ENCODE measurements at regions of chr6 and their contacts with region 1.

Region 1: DNA sequence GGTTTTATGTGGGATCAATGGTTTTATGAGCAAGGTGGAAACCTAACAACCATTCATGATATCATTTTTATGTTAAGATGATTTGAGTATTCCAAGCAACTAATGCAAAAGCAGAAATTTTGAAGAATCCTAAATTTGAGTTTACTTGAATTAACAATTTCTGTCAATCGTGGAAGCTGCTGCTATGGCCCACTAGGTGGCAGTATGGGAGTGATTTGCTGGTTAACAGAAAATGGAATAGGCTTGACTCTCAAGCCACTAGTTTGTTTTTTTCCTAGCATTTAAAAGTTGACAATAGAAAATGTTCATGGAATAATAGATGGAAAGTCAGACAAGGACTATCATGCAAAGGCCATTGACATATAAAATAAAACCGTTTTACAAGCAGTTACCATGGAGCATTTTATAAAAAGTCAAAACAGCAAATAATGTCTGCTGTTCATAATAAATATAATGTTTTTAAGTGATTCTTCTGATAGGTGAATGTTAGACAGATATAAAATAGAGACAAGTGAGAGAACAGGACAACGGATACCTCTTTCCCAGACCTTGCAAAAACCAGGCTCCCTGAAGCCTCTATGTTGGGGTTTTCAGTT is 43.0 kb upstream of the TMEM200A start:
- DNase-seq: peak; percentile 17 to 49
- H3K4me3 ChIP-seq: no peak overlapping the region
- H3K27ac ChIP-seq: no peak overlapping the region
- H3K4me1 ChIP-seq: no peaks in the 10 kb centered on the region
- H3K27me3 ChIP-seq: no peaks in the 10 kb centered on the region
- CTCF ChIP-seq: peak; percentile 55 to 79 (median 68)
- POLR2A ChIP-seq: no peak

Region 2: DNA sequence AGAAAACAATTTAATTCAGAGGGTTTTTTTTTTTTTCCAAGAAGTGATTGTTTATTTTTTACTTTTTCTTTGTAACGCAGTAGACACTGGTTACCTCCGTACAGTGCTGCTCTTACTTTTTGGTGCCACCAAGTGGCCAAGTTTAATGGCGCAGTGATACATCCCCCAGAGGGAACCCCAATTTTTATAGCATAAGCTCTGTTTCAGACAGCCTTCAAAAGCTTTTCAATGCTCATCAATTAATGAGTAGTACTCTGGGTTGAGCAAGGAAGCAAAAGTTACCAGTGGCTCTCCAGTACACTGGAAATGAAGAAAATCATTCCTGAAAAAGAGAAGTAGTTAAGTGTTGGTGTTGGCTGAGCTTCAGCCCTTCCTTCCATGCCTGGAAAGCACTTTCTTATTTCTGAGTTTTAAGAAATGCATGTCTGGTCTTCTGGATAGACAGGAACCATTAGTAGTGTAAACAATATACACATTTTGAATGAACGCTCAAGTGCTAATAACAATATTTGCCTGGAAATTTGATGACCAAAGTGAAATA is 375.3 kb after region 1 on chr6:
- intact Hi-C with region 1: loop called (anchors 5 kb)
- DNase-seq: no peak
- H3K4me3 ChIP-seq: no peak overlapping the region
- H3K27ac ChIP-seq: no peak overlapping the region
- H3K4me1 ChIP-seq: no peaks in the 10 kb centered on the region
- H3K27me3 ChIP-seq: no peaks in the 10 kb centered on the region
- CTCF ChIP-seq: peak in 5 of 6 experiments; percentile 15 to 43 (median 27)
- POLR2A ChIP-seq: no peak

Region 3: DNA sequence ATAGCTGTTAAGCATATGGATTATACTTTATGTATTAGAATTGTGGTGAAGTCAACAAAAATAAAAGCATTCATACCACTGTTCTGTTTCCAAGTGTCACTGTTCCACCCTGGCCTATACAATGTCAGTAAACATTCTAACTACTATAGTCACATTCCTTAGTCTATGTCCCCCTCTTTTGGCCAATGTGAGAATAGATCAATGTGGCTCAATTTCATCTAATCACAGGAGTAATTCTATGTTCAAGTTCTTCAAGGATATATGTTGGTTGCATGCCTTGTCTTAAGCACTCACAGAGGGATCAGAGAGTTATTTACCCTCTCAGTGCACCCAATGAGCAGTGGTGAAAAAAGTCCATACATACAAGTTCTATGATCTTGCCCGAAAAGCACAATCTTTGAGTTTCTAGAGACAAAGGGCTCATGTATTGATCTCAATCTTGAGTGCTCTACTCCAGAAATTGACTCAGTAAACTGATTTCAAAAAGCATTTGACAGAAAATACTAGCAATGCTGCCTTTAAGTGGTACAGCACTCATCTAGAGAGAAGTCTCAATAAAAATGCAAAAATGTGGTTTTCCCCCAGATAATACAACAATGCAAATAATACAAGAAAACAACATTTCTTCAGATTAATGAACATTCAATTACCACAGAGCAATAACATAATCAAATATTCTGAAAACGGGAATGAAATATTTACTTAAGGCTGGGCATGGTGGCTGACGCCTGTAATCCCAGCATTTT is 521.0 kb after region 1 on chr6:
- intact Hi-C with region 1: loop called (anchors 10 kb)
- DNase-seq: no peak
- H3K4me3 ChIP-seq: no peak overlapping the region
- H3K27ac ChIP-seq: no peak overlapping the region
- H3K4me1 ChIP-seq: peaks cover 0 to 3% of the 10 kb centered on the region in 2 donors
- H3K27me3 ChIP-seq: no peaks in the 10 kb centered on the region
- CTCF ChIP-seq: peak in 3 of 6 experiments; percentile 38 to 66 (median 56)
- POLR2A ChIP-seq: no peak